ENCODE measurements at regions of chr9 and their contacts with region 1.

Region 1: GRCh38 chr9:21395778-21396717 is 10.8 kb upstream of the IFNA2 start:
- DNase-seq: peak; percentile 74
- ATAC-seq: peak; percentile 85
- H3K4me3 Mint-ChIP-seq: peak overlapping the region; percentile 64
- H3K27ac Mint-ChIP-seq: no peak overlapping the region
- H3K4me1 Mint-ChIP-seq: peaks cover 12% of the 10 kb centered on the region
- H3K27me3 Mint-ChIP-seq: peaks cover 38% of the 10 kb centered on the region
- CTCF ChIP-seq: peak; percentile 97

Region 2: GRCh38 chr9:21141427-21141882 is 254.6 kb before region 1 on chr9 and contains the start of gene IFNW1:
- CTCF ChIA-PET with region 1: no interaction called
- POLR2A ChIA-PET with region 1: no interaction called
- intact Hi-C with region 1: no loop called
- DNase-seq: no peak
- ATAC-seq: no peak
- H3K4me3 Mint-ChIP-seq: no peak within 1 kb of the TSS
- H3K27ac Mint-ChIP-seq: no peak within 1 kb of the TSS
- H3K4me1 Mint-ChIP-seq: peaks cover 20% of the 10 kb centered on the region
- H3K27me3 Mint-ChIP-seq: no peaks in the 10 kb centered on the region
- CTCF ChIP-seq: no peak
- total RNA-seq, gene IFNW1: not detected

Region 3: GRCh38 chr9:21234153-21234687 is 161.8 kb before region 1 on chr9:
- CTCF ChIA-PET with region 1: interaction called, 17 read pairs
- POLR2A ChIA-PET with region 1: no interaction called
- intact Hi-C with region 1: no loop called
- DNase-seq: no peak
- ATAC-seq: no peak
- H3K4me3 Mint-ChIP-seq: no peak overlapping the region
- H3K27ac Mint-ChIP-seq: no peak overlapping the region
- H3K4me1 Mint-ChIP-seq: peaks cover 7% of the 10 kb centered on the region
- H3K27me3 Mint-ChIP-seq: peaks cover 3% of the 10 kb centered on the region
- CTCF ChIP-seq: no peak

Region 4: GRCh38 chr9:21317956-21318923 is 77.8 kb before region 1 on chr9:
- CTCF ChIA-PET with region 1: interaction called, 73 read pairs
- POLR2A ChIA-PET with region 1: no interaction called
- intact Hi-C with region 1: no loop called
- DNase-seq: peak; percentile 61
- ATAC-seq: peak; percentile 76
- H3K4me3 Mint-ChIP-seq: no peak overlapping the region
- H3K27ac Mint-ChIP-seq: no peak overlapping the region
- H3K4me1 Mint-ChIP-seq: peaks cover 14% of the 10 kb centered on the region
- H3K27me3 Mint-ChIP-seq: no peaks in the 10 kb centered on the region
- CTCF ChIP-seq: peak; percentile 75

Region 5: GRCh38 chr9:21334701-21335632 is 61.1 kb before region 1 on chr9 and contains the start of gene KLHL9:
- CTCF ChIA-PET with region 1: interaction called, 150 read pairs
- POLR2A ChIA-PET with region 1: interaction called, 3 read pairs
- intact Hi-C with region 1: no loop called
- DNase-seq: peak; percentile 89
- ATAC-seq: peak; percentile 90
- H3K4me3 Mint-ChIP-seq: peak within 1 kb of the TSS; percentile 89
- H3K27ac Mint-ChIP-seq: peak within 1 kb of the TSS; percentile 89
- H3K4me1 Mint-ChIP-seq: peaks cover 47% of the 10 kb centered on the region
- H3K27me3 Mint-ChIP-seq: no peaks in the 10 kb centered on the region
- CTCF ChIP-seq: no peak
- total RNA-seq, gene KLHL9: 15.6 to 15.8 TPM

Region 6: DNA sequence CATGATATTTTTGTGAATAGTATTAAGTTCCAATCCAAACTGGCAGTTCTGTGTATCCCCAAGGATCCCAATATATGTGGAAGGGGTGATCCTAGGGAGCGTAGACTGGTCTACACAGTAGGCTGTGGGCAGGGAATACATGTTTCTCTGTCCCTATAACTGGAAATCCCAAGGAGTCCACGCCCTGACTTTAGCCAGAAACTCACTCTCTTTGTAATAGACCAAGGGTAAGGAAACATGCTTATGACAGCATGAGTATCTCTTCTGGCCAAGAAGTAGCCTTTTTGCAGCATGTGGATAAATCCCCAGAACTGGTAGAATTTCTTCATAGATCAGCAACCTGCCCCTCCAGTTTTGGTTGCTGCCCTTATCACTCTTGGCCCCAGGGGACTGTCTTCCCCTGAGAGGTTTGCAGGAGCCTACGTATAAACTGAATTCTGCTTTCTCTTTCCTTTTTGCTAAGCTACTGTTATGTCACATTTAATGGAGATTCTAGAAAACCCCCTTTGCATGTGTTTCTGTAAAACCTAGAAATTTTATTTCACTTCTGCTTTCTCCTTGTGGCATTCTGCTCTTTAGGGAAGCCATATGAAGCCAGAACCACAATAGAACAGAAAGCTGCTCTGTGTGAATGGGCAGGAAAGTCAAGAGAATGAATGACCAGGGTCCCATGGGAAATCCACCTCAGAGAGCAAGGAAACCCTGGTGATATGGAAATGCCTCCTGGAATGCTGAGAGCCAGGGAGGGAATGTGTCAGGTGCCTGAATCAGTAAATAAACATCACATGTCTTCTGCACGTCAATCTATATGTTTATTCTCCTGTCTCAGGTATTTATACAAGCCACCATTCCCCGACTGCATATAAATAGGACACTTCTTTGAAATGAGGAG is 14.4 kb before region 1 on chr9:
- CTCF ChIA-PET with region 1: interaction called, 28 read pairs
- POLR2A ChIA-PET with region 1: no interaction called
- intact Hi-C with region 1: no loop called
- DNase-seq: peak; percentile 34
- ATAC-seq: peak; percentile 91
- H3K4me3 Mint-ChIP-seq: peak overlapping the region; percentile 24
- H3K27ac Mint-ChIP-seq: no peak overlapping the region
- H3K4me1 Mint-ChIP-seq: peaks cover 20% of the 10 kb centered on the region
- H3K27me3 Mint-ChIP-seq: peaks cover 31% of the 10 kb centered on the region
- CTCF ChIP-seq: no peak

Region 7: GRCh38 chr9:21428235-21428634 is 32.2 kb after region 1 on chr9:
- CTCF ChIA-PET with region 1: interaction called, 12 read pairs
- POLR2A ChIA-PET with region 1: no interaction called
- intact Hi-C with region 1: no loop called
- DNase-seq: no peak
- ATAC-seq: no peak
- H3K4me3 Mint-ChIP-seq: no peak overlapping the region
- H3K27ac Mint-ChIP-seq: no peak overlapping the region
- H3K4me1 Mint-ChIP-seq: no peaks in the 10 kb centered on the region
- H3K27me3 Mint-ChIP-seq: peaks cover 26% of the 10 kb centered on the region
- CTCF ChIP-seq: no peak